ENCODE measurements at regions of chr11 and their contacts with region 1.

Region 1: DNA sequence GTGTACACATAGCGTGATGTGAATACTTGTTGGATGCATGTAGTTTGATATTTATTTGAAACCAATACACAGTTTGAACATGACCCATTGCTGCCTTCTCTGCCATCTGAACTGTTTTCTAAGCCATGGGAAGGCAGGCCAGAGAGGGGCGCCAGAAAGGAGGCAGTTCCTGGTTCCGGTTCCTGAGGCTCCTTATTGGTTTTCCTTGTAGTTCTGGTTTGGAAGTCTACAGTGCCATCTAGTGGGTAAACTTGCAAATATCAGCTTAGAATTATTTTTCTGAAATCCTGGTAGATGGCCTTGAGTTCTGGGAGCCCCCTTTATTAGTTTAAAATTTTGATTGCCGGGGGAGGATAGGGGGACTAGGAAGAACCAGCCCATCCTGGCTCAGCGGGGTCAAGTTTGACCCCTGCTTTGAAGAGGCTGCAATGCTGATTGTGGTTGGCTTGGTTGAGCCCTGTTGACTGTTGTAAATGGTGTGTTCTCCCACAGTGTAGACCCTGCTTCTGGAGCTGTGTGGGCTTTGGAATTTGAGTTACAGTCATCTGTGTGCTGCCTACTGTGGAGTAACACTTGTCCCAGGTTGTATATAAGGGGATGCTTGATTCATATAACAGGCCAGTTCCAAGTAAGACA is 48.4 kb downstream of the GRAMD1B start:
- DNase-seq: no peak
- CTCF ChIP-seq: peak; percentile 29

Region 2: GRCh38 chr11:122998727-122999366 is 479.6 kb before region 1 on chr11:
- in situ Hi-C with region 1: no loop called
- DNase-seq: no peak
- CTCF ChIP-seq: no peak

Region 3: DNA sequence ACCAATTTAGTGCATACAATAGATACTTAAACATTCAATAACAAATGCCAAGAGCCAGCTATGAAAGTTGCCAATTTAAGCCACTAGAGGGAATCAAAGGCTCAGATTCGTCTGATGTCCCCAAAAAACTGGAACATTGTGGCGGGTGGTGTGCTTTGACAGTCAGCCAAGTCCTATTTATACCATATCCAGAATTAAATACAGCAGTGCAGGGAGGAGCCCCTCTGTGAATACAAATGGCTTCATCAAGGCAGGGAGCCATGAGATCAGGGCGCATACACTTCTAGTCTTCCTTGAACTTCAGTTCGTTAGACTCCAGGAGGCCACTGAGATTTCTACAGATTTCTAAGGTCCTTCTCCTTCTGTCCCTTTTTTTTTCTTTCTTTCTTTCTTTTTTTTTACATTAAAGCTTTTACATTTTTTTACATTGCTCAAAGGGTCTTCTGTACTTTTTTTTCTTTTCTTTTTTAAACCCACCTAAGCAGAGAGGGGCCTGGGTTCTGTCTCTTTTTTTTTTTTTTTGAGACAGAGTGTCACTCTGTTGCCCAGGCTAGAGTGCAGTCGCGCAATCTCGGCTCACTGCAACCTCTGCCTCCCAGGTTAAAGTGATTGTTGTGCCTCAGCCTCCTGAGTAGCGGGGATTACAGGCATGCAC is 375.0 kb before region 1 on chr11:
- in situ Hi-C with region 1: loop called (anchors 25 kb)
- DNase-seq: peak; percentile 39
- CTCF ChIP-seq: peak; percentile 19

Region 4: GRCh38 chr11:123301696-123302400 is 176.6 kb before region 1 on chr11:
- in situ Hi-C with region 1: loop called (anchors 10 kb)
- DNase-seq: peak; percentile 90
- CTCF ChIP-seq: peak; percentile 93